ENCODE measurements at regions of chr14 and their contacts with region 1.

Region 1: DNA sequence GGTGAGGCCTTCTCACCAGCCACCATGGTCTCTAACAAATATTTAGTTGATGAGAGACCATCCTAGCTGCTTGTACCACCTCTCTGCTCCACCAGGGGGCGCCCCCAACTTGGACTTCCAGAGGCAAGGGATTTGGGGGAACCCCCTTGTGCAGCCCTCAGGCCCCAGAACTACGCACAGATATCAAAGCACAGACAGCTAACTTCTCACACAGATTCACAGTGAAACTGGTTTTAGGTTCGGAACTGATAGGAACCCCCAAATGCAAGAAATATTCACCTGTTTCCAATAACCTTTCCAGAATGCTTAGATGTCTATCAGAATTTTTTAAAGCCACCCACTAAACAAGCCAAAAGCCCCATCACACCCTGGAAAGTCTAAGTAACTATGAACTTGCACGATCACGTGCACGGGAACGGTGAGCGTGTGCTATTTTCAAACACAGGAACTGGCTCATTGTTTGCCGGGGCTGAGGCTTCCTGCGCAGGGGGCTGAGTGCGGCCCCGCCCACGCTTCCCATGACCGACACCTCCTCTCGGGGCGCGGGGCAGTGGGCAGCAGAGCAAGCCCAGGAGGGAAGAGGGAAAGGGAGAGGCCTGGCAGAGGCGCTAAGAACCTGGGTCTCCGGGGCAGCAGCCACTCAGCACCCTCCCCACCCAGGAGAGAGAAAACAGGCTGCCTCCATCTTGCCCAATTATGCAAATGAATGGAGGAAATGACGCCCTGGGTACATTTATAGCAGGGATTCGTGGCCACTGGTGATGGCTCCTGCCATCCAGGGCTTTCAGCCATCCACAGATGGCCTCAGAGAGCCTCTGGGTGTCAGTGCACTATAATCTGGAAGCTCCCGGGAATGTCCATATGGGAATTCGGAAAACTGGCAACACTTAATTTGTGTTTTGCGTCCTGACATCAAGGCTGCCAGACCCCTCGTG is 79.4 kb upstream of the GPR68 start:
- DNase-seq: peak; percentile 86
- H3K4me3 ChIP-seq: peak overlapping the region; percentile 69
- H3K27ac ChIP-seq: peak overlapping the region; percentile 85
- H3K4me1 ChIP-seq: peaks cover 63% of the 10 kb centered on the region
- H3K27me3 ChIP-seq: peaks cover 2% of the 10 kb centered on the region
- CTCF ChIP-seq: peak; percentile 95

Region 2: GRCh38 chr14:91418387-91419043 is 94.6 kb after region 1 on chr14:
- intact Hi-C with region 1: loop called (anchors 5 kb)
- DNase-seq: peak; percentile 66
- H3K4me3 ChIP-seq: peak overlapping the region; percentile 77
- H3K27ac ChIP-seq: no peak overlapping the region
- H3K4me1 ChIP-seq: peaks cover 28% of the 10 kb centered on the region
- H3K27me3 ChIP-seq: peaks cover 50% of the 10 kb centered on the region
- CTCF ChIP-seq: peak; percentile 95

Region 3: GRCh38 chr14:91649930-91650329 is 326.0 kb after region 1 on chr14:
- intact Hi-C with region 1: no loop called
- DNase-seq: no peak
- H3K4me3 ChIP-seq: no peak overlapping the region
- H3K27ac ChIP-seq: no peak overlapping the region
- H3K4me1 ChIP-seq: no peaks in the 10 kb centered on the region
- H3K27me3 ChIP-seq: peaks cover 25% of the 10 kb centered on the region
- CTCF ChIP-seq: peak; percentile 69